ENCODE measurements at regions of chr3 and their contacts with region 1.

Region 1: GRCh38 chr3:152346740-152347139 is 78.0 kb downstream of the MBNL1 start:
- DNase-seq: no peak
- ATAC-seq: no peak
- H3K4me3 ChIP-seq: no peak overlapping the region
- H3K4me3 Mint-ChIP-seq: no peak overlapping the region
- H3K27ac ChIP-seq: no peak overlapping the region
- H3K27ac Mint-ChIP-seq: no peak overlapping the region
- H3K4me1 ChIP-seq: peaks cover 0 to 3% of the 10 kb centered on the region in 2 experiments
- H3K4me1 Mint-ChIP-seq: peaks cover 38 to 51% (median 47%) of the 10 kb centered on the region in 3 donors
- H3K27me3 ChIP-seq: no peaks in the 10 kb centered on the region
- H3K27me3 Mint-ChIP-seq: no peaks in the 10 kb centered on the region

Region 2: GRCh38 chr3:152359395-152360240 is 12.9 kb after region 1 on chr3:
- CTCF ChIA-PET with region 1: interaction called in 1 of 2 experiments, 3 read pairs
- POLR2A ChIA-PET with region 1: interaction called, 5 to 11 read pairs
- DNase-seq: no peak
- ATAC-seq: no peak
- H3K4me3 ChIP-seq: no peak overlapping the region
- H3K4me3 Mint-ChIP-seq: peak overlapping the region in 2 of 3 donors; percentile 7 to 15
- H3K27ac ChIP-seq: no peak overlapping the region
- H3K27ac Mint-ChIP-seq: peak overlapping the region; percentile 66 to 70
- H3K4me1 ChIP-seq: peaks cover 4 to 20% of the 10 kb centered on the region in 2 experiments
- H3K4me1 Mint-ChIP-seq: peaks cover 83 to 93% (median 85%) of the 10 kb centered on the region in 3 donors
- H3K27me3 ChIP-seq: no peaks in the 10 kb centered on the region
- H3K27me3 Mint-ChIP-seq: no peaks in the 10 kb centered on the region

Measured in T-cell (primary cell).